ENCODE measurements at regions of chr15 and their contacts with region 1.

Region 1: GRCh38 chr15:82999905-83000671 is 11.4 kb downstream of the C15orf40 start:
- DNase-seq: no peak
- ATAC-seq: peak; percentile 78 to 79

Region 2: GRCh38 chr15:82849556-82850512 is 150.3 kb before region 1 on chr15:
- intact Hi-C with region 1: loop called (anchors 2 to 10 kb)
- DNase-seq: peak; percentile 81
- ATAC-seq: peak; percentile 92